ENCODE measurements at regions of chr12 and their contacts with region 1.

Region 1: DNA sequence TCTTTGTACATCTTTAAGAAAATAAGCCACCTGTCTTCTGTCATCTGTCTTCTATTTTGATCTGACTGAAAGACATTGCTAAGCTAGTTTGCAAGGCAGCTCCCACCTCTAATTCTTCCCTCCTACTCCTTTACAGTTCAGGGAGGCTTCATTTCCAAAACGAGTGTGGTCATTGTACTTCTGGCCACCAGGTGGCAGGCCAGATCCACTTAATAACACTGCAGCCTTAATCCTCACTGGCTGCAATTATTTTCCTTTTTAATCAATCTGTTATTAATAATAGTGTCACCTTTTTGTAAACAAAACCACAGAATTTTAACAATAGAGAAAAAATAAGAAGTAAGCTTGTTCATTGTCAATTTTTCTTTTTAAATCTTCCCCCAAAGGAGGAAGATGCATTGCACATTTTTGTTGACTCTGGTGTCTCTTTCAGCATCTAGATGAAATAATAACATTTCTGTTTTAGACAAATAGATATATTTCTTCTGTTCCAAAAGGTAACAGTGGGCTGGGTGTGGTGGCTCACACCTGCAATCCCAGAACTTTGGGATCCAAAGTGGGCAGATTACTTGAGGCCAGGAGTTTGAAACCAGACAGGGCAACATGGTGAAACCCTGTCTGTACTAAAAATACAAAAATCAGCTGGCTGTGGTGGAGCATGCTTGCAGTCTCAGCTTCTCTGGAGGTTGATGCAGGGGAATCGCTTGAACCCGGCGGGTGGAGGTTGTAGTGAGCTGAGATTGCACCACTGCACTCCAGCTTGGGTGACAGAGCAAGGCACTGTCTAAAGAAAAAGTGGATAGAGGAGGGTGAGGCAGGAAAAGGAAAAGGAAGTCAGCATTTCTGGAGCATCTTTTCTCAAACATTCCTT is 23.3 kb downstream of the GABARAPL1 start:
- DNase-seq: peak; percentile 36
- H3K4me3 Mint-ChIP-seq: no peak overlapping the region
- H3K27ac Mint-ChIP-seq: no peak overlapping the region
- H3K4me1 Mint-ChIP-seq: no peaks in the 10 kb centered on the region
- H3K27me3 Mint-ChIP-seq: peaks cover 16% of the 10 kb centered on the region

Region 2: GRCh38 chr12:10212201-10213131 is 23.5 kb before region 1 on chr12 and contains the start of gene GABARAPL1:
- CTCF ChIA-PET with region 1: no interaction called
- POLR2A ChIA-PET with region 1: no interaction called
- DNase-seq: peak; percentile 87
- H3K4me3 Mint-ChIP-seq: peak within 1 kb of the TSS; percentile 91
- H3K27ac Mint-ChIP-seq: peak within 1 kb of the TSS; percentile 85
- H3K4me1 Mint-ChIP-seq: peaks cover 33% of the 10 kb centered on the region
- H3K27me3 Mint-ChIP-seq: peaks cover 2% of the 10 kb centered on the region
- total RNA-seq, gene GABARAPL1: 13.1 to 14.0 TPM

Region 3: DNA sequence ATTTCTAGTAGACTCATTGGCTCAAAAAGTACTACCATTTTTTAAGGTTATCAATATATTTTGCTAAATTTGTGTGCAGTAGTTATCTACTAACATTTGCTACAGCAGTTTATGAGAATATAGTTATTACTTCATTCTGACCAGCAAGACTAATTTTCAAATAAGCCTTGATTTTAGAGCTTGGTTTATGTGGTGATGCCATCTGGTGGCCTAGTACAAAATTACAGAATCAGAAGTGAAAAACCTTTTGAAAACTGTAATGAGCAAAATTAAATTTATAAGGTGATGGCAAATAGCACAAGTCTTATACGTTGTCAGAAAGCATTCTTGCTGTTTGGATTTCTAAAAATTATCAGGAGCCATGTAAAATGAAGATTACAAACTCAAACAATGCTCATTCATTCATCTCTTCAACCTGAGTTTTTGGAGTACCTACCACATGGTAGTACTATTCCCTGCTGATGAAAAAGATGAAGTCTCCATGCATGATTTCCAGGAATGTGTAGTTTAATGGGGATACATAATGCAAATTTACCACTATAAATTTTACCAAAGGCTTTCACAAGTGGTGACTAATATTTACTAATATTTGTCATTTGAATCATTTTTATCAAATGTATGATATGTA is 326.4 kb after region 1 on chr12:
- CTCF ChIA-PET with region 1: interaction called, 14 read pairs
- POLR2A ChIA-PET with region 1: no interaction called
- DNase-seq: no peak
- H3K4me3 Mint-ChIP-seq: no peak overlapping the region
- H3K27ac Mint-ChIP-seq: no peak overlapping the region
- H3K4me1 Mint-ChIP-seq: no peaks in the 10 kb centered on the region
- H3K27me3 Mint-ChIP-seq: peaks cover 38% of the 10 kb centered on the region

Region 4: DNA sequence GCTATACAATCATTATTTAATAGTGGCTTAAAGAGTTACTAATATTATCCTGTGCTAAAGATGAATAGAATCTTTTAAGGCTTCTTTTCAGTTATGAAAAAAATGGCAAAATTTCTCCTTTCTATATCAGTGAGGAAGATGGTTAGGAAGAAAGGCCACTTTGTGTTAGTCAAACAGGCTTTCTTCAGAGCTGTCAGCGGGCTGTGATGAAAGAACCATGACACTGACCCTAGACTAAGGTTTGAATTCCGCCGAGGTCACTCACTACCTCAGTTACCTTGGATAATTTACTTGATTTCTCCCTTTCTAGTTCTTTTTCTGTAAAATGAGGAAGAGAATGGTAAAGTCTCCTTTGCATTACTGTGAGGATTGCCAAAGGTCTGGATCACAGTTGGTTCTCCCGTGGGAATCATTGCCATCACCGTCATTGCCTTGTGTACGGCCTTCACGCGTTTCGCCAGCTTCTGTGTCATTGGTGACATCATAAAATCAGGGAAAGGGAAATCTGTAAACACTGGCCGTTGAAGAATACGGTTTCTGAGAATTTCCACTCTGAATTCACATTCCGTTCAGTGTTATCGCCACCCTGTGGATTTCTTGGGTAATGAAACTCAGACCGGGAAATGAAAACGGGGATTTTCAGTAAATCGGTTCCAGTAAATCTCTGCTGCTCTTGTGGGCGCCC is 513.8 kb after region 1 on chr12:
- CTCF ChIA-PET with region 1: interaction called, 15 read pairs
- POLR2A ChIA-PET with region 1: no interaction called
- DNase-seq: peak; percentile 70
- H3K4me3 Mint-ChIP-seq: peak overlapping the region; percentile 56
- H3K27ac Mint-ChIP-seq: no peak overlapping the region
- H3K4me1 Mint-ChIP-seq: peaks cover 15% of the 10 kb centered on the region
- H3K27me3 Mint-ChIP-seq: peaks cover 49% of the 10 kb centered on the region

Measured in activated CD4-positive, alpha-beta memory T cell treated with anti-CD3 and anti-CD28 coated beads, Interleukin-2, amount 10 ng/mL, durations not matched to agents 7 days and 5 days (primary cell).